Colonic mucosa (tissue), 4 donors: ENCODE measurements at regions of chr17 and their contacts with region 1.

Region 1: GRCh38 chr17:60435244-60436167 is 13.2 kb downstream of the CHCT1 start:
- DNase-seq: peak; percentile 75
- H3K4me3 ChIP-seq: no peak overlapping the region
- H3K27ac ChIP-seq: no peak overlapping the region
- H3K4me1 ChIP-seq: no peaks in the 10 kb centered on the region
- H3K27me3 ChIP-seq: no peaks in the 10 kb centered on the region
- CTCF ChIP-seq: peak; percentile 86

Region 2: DNA sequence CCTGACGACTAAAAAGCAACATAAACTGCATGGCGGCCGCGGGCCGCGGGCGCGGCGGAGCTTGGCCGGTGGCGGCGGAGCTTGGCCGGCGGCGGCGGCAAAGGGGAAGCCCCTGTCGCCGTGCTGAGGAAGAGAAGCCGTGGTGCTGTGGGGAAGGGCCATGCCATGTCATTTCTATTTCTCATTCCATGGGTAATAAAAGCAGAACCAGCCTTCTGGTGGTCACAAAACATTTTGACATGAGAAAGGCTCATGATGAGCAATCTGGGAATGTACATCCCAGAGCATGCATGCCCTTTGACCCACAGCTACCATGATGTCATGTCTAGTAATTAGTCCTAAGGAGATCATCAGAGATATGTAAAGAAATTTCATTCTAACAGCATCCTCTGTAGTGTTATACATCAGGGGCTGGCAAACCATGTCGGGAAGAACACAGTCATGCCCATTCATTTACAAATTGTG is 332.8 kb before region 1 on chr17:
- intact Hi-C with region 1: loop called (anchors 10 kb)
- DNase-seq: peak; percentile 25
- H3K4me3 ChIP-seq: no peak overlapping the region
- H3K27ac ChIP-seq: no peak overlapping the region
- H3K4me1 ChIP-seq: no peaks in the 10 kb centered on the region
- H3K27me3 ChIP-seq: no peaks in the 10 kb centered on the region
- CTCF ChIP-seq: no peak

Region 3: DNA sequence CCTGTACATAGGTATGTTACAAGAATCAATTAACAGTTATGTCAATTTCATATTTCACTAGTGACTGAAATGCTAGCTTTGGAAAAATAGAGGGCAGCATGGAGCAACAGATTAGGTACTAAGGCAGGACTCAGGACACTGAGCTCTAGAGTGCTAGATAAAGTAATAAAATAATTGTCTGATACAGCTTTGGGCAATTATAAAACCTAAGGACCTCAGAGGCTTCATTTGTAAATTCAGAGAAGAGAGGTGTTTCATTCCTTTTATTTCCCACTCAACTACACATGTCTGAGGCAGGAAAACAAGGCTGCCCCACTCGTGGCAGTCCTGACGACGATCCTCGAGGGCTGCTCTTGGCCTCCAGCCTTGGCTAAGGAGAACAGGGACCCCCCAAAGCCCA is 204.3 kb before region 1 on chr17:
- intact Hi-C with region 1: loop called (anchors 5 kb)
- DNase-seq: no peak
- H3K4me3 ChIP-seq: no peak overlapping the region
- H3K27ac ChIP-seq: no peak overlapping the region
- H3K4me1 ChIP-seq: no peaks in the 10 kb centered on the region
- H3K27me3 ChIP-seq: no peaks in the 10 kb centered on the region
- CTCF ChIP-seq: peak; percentile 46

Region 4: GRCh38 chr17:60390881-60391614 is 44.5 kb before region 1 on chr17:
- intact Hi-C with region 1: no loop called
- DNase-seq: peak; percentile 39
- H3K4me3 ChIP-seq: peak overlapping the region; percentile 93
- H3K27ac ChIP-seq: peak overlapping the region; percentile 98
- H3K4me1 ChIP-seq: no peaks in the 10 kb centered on the region
- H3K27me3 ChIP-seq: no peaks in the 10 kb centered on the region
- CTCF ChIP-seq: no peak

Region 5: DNA sequence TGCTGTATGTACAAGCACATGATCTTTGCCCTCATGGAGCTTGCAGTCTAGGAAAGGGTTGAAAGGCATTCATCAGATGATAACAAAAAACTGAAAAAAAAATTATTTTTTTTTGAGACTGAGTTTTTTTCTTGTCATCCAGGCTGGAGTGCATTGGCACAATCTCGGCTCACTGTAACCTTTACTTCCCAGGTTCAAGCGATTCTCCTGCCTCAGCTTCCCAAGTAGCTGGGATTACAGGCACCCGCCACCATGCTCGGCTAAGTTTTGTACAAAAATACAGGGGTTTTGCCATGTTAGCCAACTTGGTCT is 203.5 kb after region 1 on chr17:
- intact Hi-C with region 1: loop called (anchors 5 kb)
- DNase-seq: no peak
- H3K4me3 ChIP-seq: no peak overlapping the region
- H3K27ac ChIP-seq: no peak overlapping the region
- H3K4me1 ChIP-seq: no peaks in the 10 kb centered on the region
- H3K27me3 ChIP-seq: no peaks in the 10 kb centered on the region
- CTCF ChIP-seq: no peak